CD14-positive monocyte (primary cell): ENCODE measurements at regions of chr1 and their contacts with region 1.

Region 1: DNA sequence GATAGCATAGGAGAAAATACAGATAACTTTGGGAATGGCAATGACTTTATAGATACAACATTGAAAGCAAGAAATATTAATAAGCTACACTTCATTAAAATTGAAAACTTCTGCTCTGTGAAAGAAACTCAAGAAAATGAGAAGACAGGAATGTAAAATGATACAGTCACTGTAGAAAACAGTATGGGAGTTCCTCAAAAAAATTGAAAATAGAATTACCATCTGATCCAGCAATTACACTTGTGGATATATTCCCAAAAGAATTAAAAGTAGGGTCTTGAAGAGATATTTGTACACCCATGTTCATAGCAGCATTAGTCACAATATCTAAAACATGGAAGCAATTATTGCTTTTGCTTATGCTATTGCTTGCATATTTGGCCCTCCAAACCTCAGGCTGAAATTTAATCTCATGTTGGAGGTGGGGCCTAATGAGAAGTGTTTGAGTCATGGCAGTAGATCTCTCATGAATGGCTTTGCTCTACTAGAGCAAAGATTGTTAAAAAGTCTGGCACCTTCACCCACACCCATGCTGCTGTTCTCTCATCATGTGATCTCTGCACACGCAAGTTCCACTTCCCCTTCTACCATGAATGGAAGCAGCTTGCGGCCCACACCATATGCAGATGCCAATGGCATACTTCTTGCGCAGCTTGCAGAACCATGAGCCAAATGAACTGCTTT is 15.3 kb upstream of the AHCYL1 start:
- DNase-seq: peak; percentile 16 to 46 (median 24)
- H3K4me3 ChIP-seq: no peak overlapping the region
- H3K4me3 Mint-ChIP-seq: no peak overlapping the region
- H3K27ac ChIP-seq: no peak overlapping the region
- H3K27ac Mint-ChIP-seq: no peak overlapping the region
- H3K4me1 ChIP-seq: no peaks in the 10 kb centered on the region
- H3K4me1 Mint-ChIP-seq: peaks cover 6% of the 10 kb centered on the region
- H3K27me3 ChIP-seq: no peaks in the 10 kb centered on the region
- H3K27me3 Mint-ChIP-seq: peaks cover 0 to 2% (median 2%) of the 10 kb centered on the region in 3 donors
- CTCF ChIP-seq: no peak

Region 2: DNA sequence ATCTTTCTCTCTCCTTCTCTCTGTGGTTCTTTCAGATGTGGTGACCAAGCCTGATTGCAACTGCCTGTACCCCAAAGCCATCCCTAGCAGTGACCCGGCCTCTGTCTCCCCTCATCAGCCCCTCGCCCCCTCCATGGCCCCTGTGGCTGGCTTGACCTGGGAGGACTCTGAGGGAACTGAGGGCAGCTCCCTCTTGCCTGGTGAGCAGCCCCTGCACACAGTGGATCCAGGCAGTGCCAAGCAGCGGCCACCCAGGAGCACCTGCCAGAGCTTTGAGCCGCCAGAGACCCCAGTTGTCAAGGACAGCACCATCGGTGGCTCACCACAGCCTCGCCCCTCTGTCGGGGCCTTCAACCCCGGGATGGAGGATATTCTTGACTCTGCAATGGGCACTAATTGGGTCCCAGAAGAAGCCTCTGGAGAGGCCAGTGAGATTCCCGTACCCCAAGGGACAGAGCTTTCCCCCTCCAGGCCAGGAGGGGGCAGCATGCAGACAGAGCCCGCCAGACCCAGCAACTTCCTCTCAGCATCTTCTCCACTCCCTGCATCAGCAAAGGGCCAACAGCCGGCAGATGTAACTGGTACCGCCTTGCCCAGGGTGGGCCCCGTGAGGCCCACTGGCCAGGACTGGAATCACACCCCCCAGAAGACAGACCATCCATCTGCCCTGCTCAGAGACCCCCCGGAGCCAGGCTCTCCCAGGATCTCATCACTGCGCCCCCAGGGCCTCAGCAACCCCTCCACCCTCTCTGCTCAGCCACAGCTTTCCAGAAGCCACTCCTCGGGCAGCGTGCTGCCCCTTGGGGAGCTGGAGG is 46.0 kb before region 1 on chr1:
- intact Hi-C with region 1: loop called in 1 of 2 experiments (anchors 5 kb)
- DNase-seq: no peak
- H3K4me3 ChIP-seq: no peak overlapping the region
- H3K4me3 Mint-ChIP-seq: no peak overlapping the region
- H3K27ac ChIP-seq: no peak overlapping the region
- H3K27ac Mint-ChIP-seq: no peak overlapping the region
- H3K4me1 ChIP-seq: peaks cover 0 to 5% of the 10 kb centered on the region in 2 donors
- H3K4me1 Mint-ChIP-seq: peaks cover 8% of the 10 kb centered on the region
- H3K27me3 ChIP-seq: no peaks in the 10 kb centered on the region
- H3K27me3 Mint-ChIP-seq: peaks cover 5 to 17% (median 9%) of the 10 kb centered on the region in 3 donors
- CTCF ChIP-seq: peak; percentile 61